ENCODE measurements at regions of chr4 and their contacts with region 1.

Region 1: GRCh38 chr4:145557720-145558119 is 61.5 kb upstream of the MMAA start:
- DNase-seq: peak; percentile 35 to 67 (median 65)
- ATAC-seq: peak; percentile 84 to 85
- H3K4me3 ChIP-seq: no peak overlapping the region
- H3K27ac ChIP-seq: no peak overlapping the region
- H3K4me1 ChIP-seq: no peaks in the 10 kb centered on the region
- H3K27me3 ChIP-seq: no peaks in the 10 kb centered on the region

Region 2: DNA sequence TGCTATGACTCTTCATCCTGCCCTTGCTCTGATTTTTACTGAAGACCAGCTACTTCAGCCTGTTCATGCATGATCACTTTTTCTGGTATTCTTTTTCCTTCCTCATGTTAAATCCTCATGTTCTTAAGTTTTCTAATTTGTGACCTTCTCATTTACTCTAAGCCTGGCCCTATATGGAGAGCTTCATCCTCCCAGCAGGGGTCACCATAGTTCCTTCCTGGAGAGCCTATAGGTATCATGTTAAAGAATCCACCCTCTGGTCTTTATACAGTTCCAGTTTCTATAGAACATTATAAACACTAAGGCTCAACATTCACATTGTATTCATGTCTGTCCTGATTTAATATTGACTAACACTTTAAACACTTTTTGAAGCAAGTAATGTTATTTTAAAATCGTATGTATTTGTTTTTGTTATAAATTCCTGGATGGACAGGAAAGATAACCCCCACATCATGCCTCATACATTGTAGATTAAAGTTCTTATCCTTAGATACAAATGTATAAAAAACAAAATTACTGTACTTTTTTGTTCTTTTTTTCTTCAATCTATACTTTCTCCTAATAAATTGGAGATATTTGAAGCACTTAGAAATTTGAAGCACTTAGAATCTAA is 323.5 kb before region 1 on chr4:
- intact Hi-C with region 1: loop called in 3 of 4 experiments (anchors 5 to 10 kb)
- DNase-seq: no peak
- ATAC-seq: peak; percentile 67 to 70
- H3K4me3 ChIP-seq: no peak overlapping the region
- H3K27ac ChIP-seq: no peak overlapping the region
- H3K4me1 ChIP-seq: no peaks in the 10 kb centered on the region
- H3K27me3 ChIP-seq: no peaks in the 10 kb centered on the region

Region 3: DNA sequence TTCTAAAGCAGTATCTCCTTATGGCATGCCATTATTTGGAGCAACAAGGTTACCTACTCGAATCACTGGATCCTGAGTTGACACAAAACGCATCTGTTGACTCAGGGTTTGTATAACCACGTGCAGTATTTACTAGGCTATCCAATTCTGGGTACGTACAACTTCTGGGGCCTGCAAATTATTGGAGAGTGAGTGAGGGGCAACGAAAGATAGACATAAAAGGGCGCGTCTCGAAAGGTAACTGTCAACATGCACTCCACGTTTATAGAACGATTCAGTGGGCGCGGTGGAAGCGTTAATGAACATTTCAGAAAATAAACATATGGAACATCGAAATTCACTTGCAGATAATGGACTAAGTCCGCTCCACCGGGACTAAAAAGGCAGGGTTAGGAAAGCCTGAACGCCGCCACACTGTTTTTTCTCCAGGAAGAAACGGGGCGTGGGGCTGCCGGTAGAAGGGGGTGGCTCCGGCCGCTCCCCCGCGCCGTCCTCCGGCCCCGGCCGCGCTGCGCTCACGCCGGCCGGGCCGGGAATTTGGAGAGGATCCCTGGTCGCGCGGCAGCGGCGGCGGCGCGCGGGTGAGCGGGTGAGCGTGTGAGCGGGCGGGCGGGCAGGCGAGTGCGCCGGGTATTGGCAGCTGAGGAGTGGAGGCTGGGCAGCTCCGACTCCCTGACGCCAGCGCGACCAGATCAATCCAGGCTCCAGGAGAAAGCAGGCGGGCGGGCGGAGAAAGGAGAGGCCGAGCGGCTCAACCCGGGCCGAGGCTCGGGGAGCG is 76.4 kb before region 1 on chr4 and contains the start of gene SMAD1:
- intact Hi-C with region 1: loop called in 1 of 4 experiments (anchors 10 kb)
- DNase-seq: peak; percentile 87 to 95 (median 95)
- ATAC-seq: peak; percentile 97 to 98
- H3K4me3 ChIP-seq: peak within 1 kb of the TSS; percentile 85
- H3K27ac ChIP-seq: peak within 1 kb of the TSS; percentile 99
- H3K4me1 ChIP-seq: no peaks in the 10 kb centered on the region
- H3K27me3 ChIP-seq: no peaks in the 10 kb centered on the region
- total RNA-seq, gene SMAD1: 8.3 to 12.0 (median 9.5) TPM

Region 4: DNA sequence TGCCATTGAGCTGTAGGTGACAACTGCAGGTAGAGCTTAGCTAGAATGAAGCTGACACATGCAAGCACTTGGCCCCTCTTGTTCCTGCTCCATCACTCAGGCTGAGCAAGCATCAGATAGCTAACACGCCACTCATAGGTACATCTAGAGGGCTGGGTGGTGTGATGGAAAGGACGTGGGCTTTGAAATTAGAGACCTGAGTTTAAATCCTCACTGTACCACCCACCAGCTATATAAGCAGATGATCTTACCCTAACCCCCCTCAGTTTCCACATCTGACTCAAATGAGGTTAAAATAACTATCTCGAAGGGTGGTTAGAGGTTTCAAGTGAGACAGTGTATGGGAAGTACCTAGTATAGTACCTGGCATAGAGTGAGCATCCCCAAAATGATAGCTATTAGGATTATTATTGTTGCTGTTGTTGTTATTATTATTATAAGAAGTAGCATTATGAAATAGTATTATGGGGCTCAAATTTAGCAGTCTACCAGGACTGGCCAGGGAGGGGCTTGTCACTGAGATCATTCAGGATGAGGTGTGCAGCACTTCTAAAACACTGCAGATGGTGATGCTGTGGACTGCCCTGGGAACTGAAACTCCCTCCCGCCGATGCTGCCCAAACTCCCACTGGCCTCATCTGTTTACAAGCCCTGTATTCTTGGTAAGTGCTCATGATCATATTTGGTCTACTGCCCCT is 715.6 kb after region 1 on chr4:
- intact Hi-C with region 1: no loop called
- DNase-seq: no peak
- ATAC-seq: no peak
- H3K4me3 ChIP-seq: no peak overlapping the region
- H3K27ac ChIP-seq: no peak overlapping the region
- H3K4me1 ChIP-seq: no peaks in the 10 kb centered on the region
- H3K27me3 ChIP-seq: no peaks in the 10 kb centered on the region